IMR-90 (cell line): ENCODE measurements at regions of chr12 and their contacts with region 1.

Region 1: GRCh38 chr12:112900299-112901145 is 6.2 kb upstream of the OAS1 start:
- DNase-seq: peak; percentile 27
- ATAC-seq: no peak
- H3K4me3 ChIP-seq: no peak overlapping the region
- H3K27ac ChIP-seq: no peak overlapping the region
- H3K4me1 ChIP-seq: no peaks in the 10 kb centered on the region
- H3K27me3 ChIP-seq: no peaks in the 10 kb centered on the region
- CTCF ChIP-seq: peak; percentile 47
- POLR2A ChIP-seq: no peak
- RAD21 ChIP-seq: peak; percentile 30; the same call in 1 of the 2 replicates

Region 2: DNA sequence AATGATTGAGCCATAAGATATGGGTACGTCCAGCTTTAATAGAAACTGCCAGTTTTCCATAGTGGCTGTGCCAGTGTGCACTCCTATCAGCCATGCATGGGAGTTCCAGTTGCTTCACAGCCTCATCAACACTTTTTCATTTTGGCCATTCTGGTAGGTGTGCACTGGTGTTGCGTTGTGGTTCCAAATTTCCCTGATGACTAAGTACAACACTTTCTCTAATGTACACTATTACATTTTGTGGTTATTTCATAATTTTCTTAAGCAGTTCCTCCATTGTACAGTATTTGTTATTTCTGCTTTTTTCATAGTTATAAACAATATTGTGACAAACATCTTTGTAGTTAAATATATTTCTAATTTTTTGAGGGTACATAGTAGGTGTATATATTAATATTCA is 15.3 kb before region 1 on chr12:
- CTCF ChIA-PET with region 1: no interaction called
- POLR2A ChIA-PET with region 1: no interaction called
- dilution Hi-C with region 1: no loop called
- in situ Hi-C with region 1: no loop called
- intact Hi-C with region 1: no loop called
- DNase-seq: no peak
- ATAC-seq: no peak
- H3K4me3 ChIP-seq: no peak overlapping the region
- H3K27ac ChIP-seq: no peak overlapping the region
- H3K4me1 ChIP-seq: no peaks in the 10 kb centered on the region
- H3K27me3 ChIP-seq: no peaks in the 10 kb centered on the region
- CTCF ChIP-seq: no peak
- POLR2A ChIP-seq: no peak
- RAD21 ChIP-seq: no peak

Region 3: GRCh38 chr12:113030875-113031525 is 130.5 kb after region 1 on chr12:
- CTCF ChIA-PET with region 1: interaction called, 8 read pairs
- POLR2A ChIA-PET with region 1: no interaction called
- dilution Hi-C with region 1: no loop called
- in situ Hi-C with region 1: no loop called
- intact Hi-C with region 1: loop called (anchors 1 kb)
- DNase-seq: peak; percentile 52
- ATAC-seq: peak; percentile 90
- H3K4me3 ChIP-seq: no peak overlapping the region
- H3K27ac ChIP-seq: no peak overlapping the region
- H3K4me1 ChIP-seq: no peaks in the 10 kb centered on the region
- H3K27me3 ChIP-seq: no peaks in the 10 kb centered on the region
- CTCF ChIP-seq: peak; percentile 67
- POLR2A ChIP-seq: no peak
- RAD21 ChIP-seq: peak; percentile 36